IMR-90 (cell line): ENCODE measurements at regions of chr17 and their contacts with region 1.

Region 1: DNA sequence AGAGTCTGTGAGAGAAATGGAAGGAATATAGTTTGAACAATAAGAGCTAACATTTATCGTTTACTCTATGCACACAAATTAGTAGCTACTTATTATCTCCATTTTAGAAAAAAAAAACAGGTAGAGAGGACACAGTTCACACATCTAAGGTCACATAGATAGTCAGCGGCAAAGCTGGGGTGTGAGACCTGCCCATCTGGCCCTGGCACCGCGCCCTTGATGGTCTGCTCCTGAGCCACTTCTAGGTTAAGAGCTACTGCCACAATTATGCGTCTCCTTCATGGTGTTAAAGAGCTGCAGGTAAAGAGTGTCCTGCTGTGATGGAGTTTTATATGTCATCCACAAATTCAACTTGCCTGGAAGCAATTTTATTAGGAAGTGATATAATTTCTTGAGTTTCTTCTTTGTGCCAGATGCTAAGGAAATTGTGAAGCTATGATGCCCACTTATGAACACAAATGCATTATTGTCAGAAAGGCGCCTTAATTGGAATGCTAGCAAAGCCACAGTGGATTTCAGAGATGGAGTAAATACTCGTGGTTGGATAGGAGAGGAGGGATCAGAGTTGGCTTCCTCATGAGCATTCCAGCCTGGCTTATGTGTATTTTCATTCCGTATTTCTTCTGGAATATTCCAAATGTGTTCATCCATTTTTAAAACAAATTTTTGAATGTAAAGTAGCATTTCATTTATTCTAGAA is 21.3 kb upstream of the MFSD6L start:
- DNase-seq: no peak
- ATAC-seq: no peak
- H3K4me3 ChIP-seq: no peak overlapping the region
- H3K27ac ChIP-seq: no peak overlapping the region
- H3K4me1 ChIP-seq: no peaks in the 10 kb centered on the region
- H3K27me3 ChIP-seq: no peaks in the 10 kb centered on the region
- CTCF ChIP-seq: no peak
- POLR2A ChIP-seq: no peak
- RAD21 ChIP-seq: no peak

Region 2: GRCh38 chr17:8766731-8767130 is 53.7 kb before region 1 on chr17:
- CTCF ChIA-PET with region 1: no interaction called
- POLR2A ChIA-PET with region 1: no interaction called
- dilution Hi-C with region 1: no loop called
- in situ Hi-C with region 1: no loop called
- intact Hi-C with region 1: loop called (anchors 1 kb)
- DNase-seq: no peak
- ATAC-seq: no peak
- H3K4me3 ChIP-seq: no peak overlapping the region
- H3K27ac ChIP-seq: no peak overlapping the region
- H3K4me1 ChIP-seq: no peaks in the 10 kb centered on the region
- H3K27me3 ChIP-seq: peaks cover 5% of the 10 kb centered on the region; the same call in 1 of the 2 replicates
- CTCF ChIP-seq: no peak
- POLR2A ChIP-seq: no peak
- RAD21 ChIP-seq: no peak

Region 3: GRCh38 chr17:8865811-8866210 is 45.4 kb after region 1 on chr17:
- CTCF ChIA-PET with region 1: no interaction called
- POLR2A ChIA-PET with region 1: no interaction called
- dilution Hi-C with region 1: no loop called
- in situ Hi-C with region 1: no loop called
- intact Hi-C with region 1: loop called (anchors 1 kb)
- DNase-seq: no peak
- ATAC-seq: no peak
- H3K4me3 ChIP-seq: no peak overlapping the region
- H3K27ac ChIP-seq: no peak overlapping the region
- H3K4me1 ChIP-seq: no peaks in the 10 kb centered on the region
- H3K27me3 ChIP-seq: peaks cover 3% of the 10 kb centered on the region; the same call in 1 of the 2 replicates
- CTCF ChIP-seq: no peak
- POLR2A ChIP-seq: no peak
- RAD21 ChIP-seq: no peak

Region 4: GRCh38 chr17:9132944-9133575 is 312.6 kb after region 1 on chr17:
- CTCF ChIA-PET with region 1: no interaction called
- POLR2A ChIA-PET with region 1: no interaction called
- dilution Hi-C with region 1: no loop called
- in situ Hi-C with region 1: no loop called
- intact Hi-C with region 1: no loop called
- DNase-seq: no peak
- ATAC-seq: no peak
- H3K4me3 ChIP-seq: no peak overlapping the region
- H3K27ac ChIP-seq: no peak overlapping the region
- H3K4me1 ChIP-seq: no peaks in the 10 kb centered on the region
- H3K27me3 ChIP-seq: no peaks in the 10 kb centered on the region
- CTCF ChIP-seq: no peak
- POLR2A ChIP-seq: no peak
- RAD21 ChIP-seq: no peak